ENCODE measurements at regions of chr17 and their contacts with region 1.

Region 1: DNA sequence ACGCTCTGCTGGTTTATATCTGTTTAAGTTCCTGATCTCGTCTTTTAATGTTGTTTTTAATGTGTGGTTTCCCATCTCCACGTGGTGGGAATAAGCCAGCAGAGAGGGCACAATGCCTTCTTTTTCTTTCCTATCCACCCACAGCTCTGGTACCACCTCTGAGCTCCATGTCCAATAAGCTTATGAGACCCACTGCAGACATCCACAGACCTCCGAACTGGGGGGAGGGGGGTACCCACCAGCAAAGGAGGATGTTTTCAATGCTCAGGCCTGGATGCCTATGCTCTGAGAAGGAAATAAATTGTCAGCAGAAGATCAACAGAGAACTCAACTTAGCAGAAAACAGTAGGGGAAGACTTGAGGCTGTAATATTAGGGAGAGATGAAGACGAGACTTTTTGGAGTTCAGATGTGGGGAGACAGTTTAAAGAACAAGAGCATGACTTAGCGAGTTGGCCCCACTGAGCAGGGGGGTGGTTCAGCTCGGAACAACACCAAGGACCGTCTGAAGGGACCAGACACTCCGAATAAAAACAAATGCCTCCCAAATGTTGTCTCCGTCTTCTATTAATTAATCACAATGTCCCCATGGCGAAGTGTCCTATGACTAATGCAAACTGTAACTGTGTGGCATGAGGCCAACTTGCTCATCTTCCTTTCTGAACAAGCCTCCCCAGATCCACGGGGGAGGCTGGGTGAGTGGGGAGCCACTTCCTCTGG is 62.7 kb downstream of the GAS7 start:
- DNase-seq: peak; percentile 70
- ATAC-seq: peak in 3 of 4 donors; percentile 32 to 79 (median 63)
- H3K4me3 ChIP-seq: no peak overlapping the region
- H3K27ac ChIP-seq: peak overlapping the region; percentile 4
- H3K4me1 ChIP-seq: no peaks in the 10 kb centered on the region
- H3K27me3 ChIP-seq: no peaks in the 10 kb centered on the region
- CTCF ChIP-seq: no peak

Region 2: GRCh38 chr17:10087081-10087754 is 48.5 kb before region 1 on chr17:
- intact Hi-C with region 1: no loop called
- DNase-seq: peak in 1 of 2 donors; percentile 54
- ATAC-seq: peak in 2 of 4 donors; percentile 48 to 67
- H3K4me3 ChIP-seq: no peak overlapping the region
- H3K27ac ChIP-seq: no peak overlapping the region
- H3K4me1 ChIP-seq: no peaks in the 10 kb centered on the region
- H3K27me3 ChIP-seq: no peaks in the 10 kb centered on the region
- CTCF ChIP-seq: no peak

Region 3: DNA sequence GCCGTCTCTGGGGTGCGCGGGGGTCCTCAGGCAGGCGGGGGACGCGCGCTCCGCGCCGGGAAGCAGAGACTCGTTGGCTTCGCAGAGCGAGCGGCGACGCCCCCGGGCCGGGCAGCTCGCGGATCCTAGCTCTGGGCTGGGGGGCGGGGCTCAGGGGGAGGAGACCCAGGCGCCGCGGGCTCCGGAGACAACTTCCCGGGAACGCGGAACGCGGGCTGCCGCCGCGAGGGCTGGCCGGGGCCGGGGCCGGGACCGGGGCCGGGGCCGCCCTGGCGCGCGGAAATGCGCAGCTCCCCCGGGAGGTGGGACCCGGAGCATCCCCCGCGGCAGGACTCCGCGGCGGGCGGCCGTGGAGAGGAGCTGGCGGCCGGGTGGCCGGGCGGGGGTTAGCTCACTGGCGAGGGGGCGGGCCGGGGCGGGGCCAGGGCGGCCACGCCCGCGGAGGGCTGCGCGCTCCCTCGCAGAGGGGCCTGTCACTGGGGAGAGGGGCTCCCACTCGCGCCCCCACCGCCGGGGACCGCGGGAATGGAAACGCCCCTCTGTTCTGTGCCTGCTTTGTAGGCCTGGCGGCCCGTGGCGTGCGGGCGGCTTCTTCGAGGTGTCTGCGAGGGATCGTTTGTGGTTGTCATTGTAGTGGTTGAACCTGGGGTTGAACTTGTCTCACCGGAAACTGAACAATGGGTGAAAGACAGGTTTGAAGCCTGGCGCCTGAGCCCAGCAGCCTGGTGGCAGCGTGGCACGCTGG is 63.0 kb after region 1 on chr17 and contains the start of gene GAS7:
- intact Hi-C with region 1: loop called in 1 of 2 experiments (anchors 10 kb)
- DNase-seq: peak; percentile 77 to 81
- ATAC-seq: peak in 3 of 4 donors; percentile 29 to 54 (median 35)
- H3K4me3 ChIP-seq: peak within 1 kb of the TSS; percentile 63
- H3K27ac ChIP-seq: no peak within 1 kb of the TSS
- H3K4me1 ChIP-seq: no peaks in the 10 kb centered on the region
- H3K27me3 ChIP-seq: peaks cover 0 to 33% (median 20%) of the 10 kb centered on the region in 3 donors
- CTCF ChIP-seq: no peak
- total RNA-seq, gene GAS7: 7.0 to 16.9 (median 9.6) TPM

Measured in psoas muscle (tissue), 8 donors.